Naive thymus-derived CD4-positive, alpha-beta T cell (primary cell): ENCODE measurements at regions of chr10 and their contacts with region 1.

Region 1: DNA sequence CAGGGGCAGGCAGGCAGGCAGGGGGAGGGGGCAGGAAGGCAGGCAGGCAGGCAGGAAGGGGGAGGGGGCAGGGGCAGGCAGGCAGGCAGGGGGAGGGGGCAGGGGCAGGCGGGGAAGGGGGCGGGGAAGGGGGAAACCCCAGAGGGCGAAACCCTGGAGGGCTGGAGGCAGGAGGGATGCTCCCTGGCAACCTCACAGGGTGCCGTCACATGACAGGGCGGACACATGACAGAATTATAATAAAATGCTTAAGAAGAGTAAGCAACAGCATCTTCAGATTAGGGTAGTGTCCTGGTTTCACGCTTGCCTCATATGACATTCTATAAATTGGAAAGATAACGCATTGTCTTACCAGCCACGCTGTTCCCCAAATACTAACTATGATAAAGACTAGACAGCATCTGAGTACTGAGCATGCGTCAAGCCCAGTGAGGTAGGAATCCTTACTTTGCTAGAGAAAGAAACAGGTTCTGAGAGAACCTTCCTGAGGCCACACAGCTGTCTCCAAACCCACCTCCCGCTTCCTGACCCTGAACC is 131.6 kb downstream of the DIP2C start:
- DNase-seq: peak in 6 of 9 donors; percentile 4 to 61 (median 34)
- ATAC-seq: peak; percentile 75
- H3K4me3 ChIP-seq: no peak overlapping the region
- H3K4me3 Mint-ChIP-seq: peak overlapping the region in 6 of 10 donors; percentile 4 to 52 (median 46)
- H3K27ac ChIP-seq: no peak overlapping the region
- H3K27ac Mint-ChIP-seq: peak overlapping the region in 3 of 9 donors; percentile 78 to 86 (median 85)
- H3K4me1 ChIP-seq: no peaks in the 10 kb centered on the region
- H3K4me1 Mint-ChIP-seq: peaks cover 4 to 18% (median 11%) of the 10 kb centered on the region in 7 donors
- H3K27me3 ChIP-seq: no peaks in the 10 kb centered on the region
- H3K27me3 Mint-ChIP-seq: peaks cover 0 to 6% (median 3%) of the 10 kb centered on the region in 5 donors

Region 2: GRCh38 chr10:987870-988666 is 430.2 kb after region 1 on chr10 and contains the start of gene GTPBP4:
- CTCF ChIA-PET with region 1: no interaction called
- POLR2A ChIA-PET with region 1: interaction called, 3 read pairs
- intact Hi-C with region 1: loop called in 1 of 2 experiments (anchors 5 kb)
- DNase-seq: peak; percentile 88 to 98 (median 95)
- ATAC-seq: peak; percentile 99
- H3K4me3 ChIP-seq: peak within 1 kb of the TSS; percentile 90
- H3K4me3 Mint-ChIP-seq: peak within 1 kb of the TSS; percentile 95 to 98 (median 96)
- H3K27ac ChIP-seq: peak within 1 kb of the TSS; percentile 95
- H3K27ac Mint-ChIP-seq: peak within 1 kb of the TSS; percentile 88 to 99 (median 97)
- H3K4me1 ChIP-seq: peaks cover 18 to 19% of the 10 kb centered on the region in 2 donors
- H3K4me1 Mint-ChIP-seq: peaks cover 21 to 45% (median 40%) of the 10 kb centered on the region in 7 donors
- H3K27me3 ChIP-seq: no peaks in the 10 kb centered on the region
- H3K27me3 Mint-ChIP-seq: no peaks in the 10 kb centered on the region
- total RNA-seq, gene GTPBP4: 39.0 to 81.8 (median 45.2) TPM